H1 (cell line): ENCODE measurements at regions of chr17 and their contacts with region 1.

Region 1: DNA sequence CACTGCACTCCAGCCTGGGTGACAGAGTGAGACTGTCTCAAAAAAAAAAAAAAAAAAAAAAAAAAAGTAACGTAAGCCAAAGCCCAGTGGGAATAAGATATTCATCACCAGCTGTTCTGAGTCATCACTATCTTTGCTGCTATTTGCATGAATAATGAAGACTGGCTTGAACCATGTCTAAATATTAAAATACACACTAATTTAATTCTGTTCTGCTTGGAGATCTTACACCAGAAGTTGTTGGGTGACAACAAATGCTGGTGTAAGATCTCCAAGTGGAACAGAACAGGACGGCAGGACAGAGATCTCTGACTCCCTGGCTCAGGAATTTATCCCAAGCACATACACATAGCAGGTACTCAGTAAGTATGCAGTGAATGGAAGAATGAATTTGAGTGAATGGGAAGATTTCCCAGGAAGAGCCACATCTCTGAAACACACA is 19.6 kb downstream of the DNAH17 start:
- DNase-seq: no peak
- H3K4me3 ChIP-seq: no peak overlapping the region
- H3K27ac ChIP-seq: no peak overlapping the region
- H3K4me1 ChIP-seq: no peaks in the 10 kb centered on the region
- H3K27me3 ChIP-seq: no peaks in the 10 kb centered on the region
- CTCF ChIP-seq: no peak
- EP300 ChIP-seq: no peak
- POLR2A ChIP-seq: no peak
- RAD21 ChIP-seq: no peak

Region 2: DNA sequence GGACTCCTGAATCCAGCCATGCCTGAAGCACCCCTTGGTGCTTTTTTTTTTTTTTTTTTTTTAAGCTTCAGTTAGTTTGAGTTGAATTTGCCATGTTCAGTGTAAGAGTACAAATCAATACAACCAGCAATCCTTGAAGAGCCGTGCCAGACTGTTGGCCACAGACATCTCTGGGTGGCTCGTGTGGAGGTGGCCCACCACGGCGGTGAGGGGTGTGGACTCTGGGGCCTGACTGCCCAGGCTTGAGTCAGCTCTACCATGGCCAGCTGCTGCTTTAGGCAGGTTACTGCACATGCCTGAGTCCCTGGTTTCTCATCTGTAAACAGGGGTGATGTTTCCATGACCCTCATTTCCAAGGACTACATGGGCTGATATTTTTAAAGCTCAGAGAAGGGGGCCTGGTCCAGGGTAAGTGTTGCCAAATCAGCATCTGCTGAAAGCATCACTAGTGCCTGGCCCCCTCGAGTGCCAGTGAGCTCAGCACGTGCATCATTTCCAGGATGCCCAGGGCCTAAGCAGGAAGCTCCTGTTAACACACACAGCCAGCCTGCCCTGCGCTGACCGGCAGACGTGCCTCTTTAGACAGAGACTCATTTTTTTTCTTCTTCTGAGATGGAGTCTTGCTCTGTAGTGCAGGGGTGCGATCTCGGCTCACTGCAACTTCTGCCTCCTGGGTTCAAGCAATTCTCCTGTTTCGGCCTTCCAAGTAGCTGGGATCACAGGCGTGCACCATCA is 70.5 kb before region 1 on chr17:
- CTCF ChIA-PET with region 1: no interaction called
- POLR2A ChIA-PET with region 1: no interaction called
- DNase-seq: no peak
- H3K4me3 ChIP-seq: no peak overlapping the region
- H3K27ac ChIP-seq: no peak overlapping the region
- H3K4me1 ChIP-seq: peaks cover 0 to 10% (median 8%) of the 10 kb centered on the region in 4 experiments; a peak in 5 of 7 replicates
- H3K27me3 ChIP-seq: peaks cover 0 to 3% (median 2%) of the 10 kb centered on the region in 4 experiments; a peak in 3 of 7 replicates
- CTCF ChIP-seq: no peak
- EP300 ChIP-seq: no peak
- POLR2A ChIP-seq: no peak
- RAD21 ChIP-seq: no peak

Region 3: GRCh38 chr17:78544881-78545755 is 12.5 kb before region 1 on chr17:
- CTCF ChIA-PET with region 1: interaction called, 18 read pairs
- POLR2A ChIA-PET with region 1: no interaction called
- DNase-seq: no peak
- H3K4me3 ChIP-seq: no peak overlapping the region
- H3K27ac ChIP-seq: no peak overlapping the region
- H3K4me1 ChIP-seq: no peaks in the 10 kb centered on the region
- H3K27me3 ChIP-seq: no peaks in the 10 kb centered on the region
- CTCF ChIP-seq: no peak
- EP300 ChIP-seq: no peak
- POLR2A ChIP-seq: no peak
- RAD21 ChIP-seq: no peak

Region 4: GRCh38 chr17:78568494-78569115 is 11.0 kb after region 1 on chr17:
- CTCF ChIA-PET with region 1: interaction called, 56 read pairs
- POLR2A ChIA-PET with region 1: no interaction called
- DNase-seq: no peak
- H3K4me3 ChIP-seq: no peak overlapping the region
- H3K27ac ChIP-seq: no peak overlapping the region
- H3K4me1 ChIP-seq: no peaks in the 10 kb centered on the region
- H3K27me3 ChIP-seq: no peaks in the 10 kb centered on the region; a peak in 1 of 7 replicates
- CTCF ChIP-seq: no peak
- EP300 ChIP-seq: no peak
- POLR2A ChIP-seq: no peak
- RAD21 ChIP-seq: no peak

Region 5: DNA sequence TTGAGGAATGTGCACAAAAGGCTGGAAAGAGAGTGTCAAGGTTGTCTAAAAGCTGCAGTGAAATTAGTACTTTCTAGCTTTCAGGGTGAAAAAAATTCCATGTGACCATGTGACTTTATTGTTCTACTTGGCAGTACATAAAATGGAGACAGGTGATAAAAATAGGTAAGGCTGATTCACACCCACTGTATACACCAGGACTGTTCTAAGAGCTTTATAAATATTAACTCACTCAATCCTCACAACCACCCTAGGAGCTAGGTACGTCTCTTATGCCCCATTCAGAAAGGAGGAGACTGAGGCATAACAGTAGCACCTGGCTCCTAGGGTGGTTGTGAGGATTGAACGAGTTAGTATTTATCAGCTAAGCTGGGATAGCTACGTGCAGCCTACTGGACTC is 47.8 kb after region 1 on chr17:
- CTCF ChIA-PET with region 1: interaction called, 11 read pairs
- POLR2A ChIA-PET with region 1: no interaction called
- DNase-seq: no peak
- H3K4me3 ChIP-seq: no peak overlapping the region; a peak in 1 of 8 replicates
- H3K27ac ChIP-seq: no peak overlapping the region
- H3K4me1 ChIP-seq: no peaks in the 10 kb centered on the region; a peak in 1 of 7 replicates
- H3K27me3 ChIP-seq: no peaks in the 10 kb centered on the region; a peak in 2 of 7 replicates
- CTCF ChIP-seq: no peak
- EP300 ChIP-seq: no peak
- POLR2A ChIP-seq: no peak
- RAD21 ChIP-seq: no peak